CD4-positive, alpha-beta memory T cell (primary cell): ENCODE measurements at regions of chr9 and their contacts with region 1.

Region 1: DNA sequence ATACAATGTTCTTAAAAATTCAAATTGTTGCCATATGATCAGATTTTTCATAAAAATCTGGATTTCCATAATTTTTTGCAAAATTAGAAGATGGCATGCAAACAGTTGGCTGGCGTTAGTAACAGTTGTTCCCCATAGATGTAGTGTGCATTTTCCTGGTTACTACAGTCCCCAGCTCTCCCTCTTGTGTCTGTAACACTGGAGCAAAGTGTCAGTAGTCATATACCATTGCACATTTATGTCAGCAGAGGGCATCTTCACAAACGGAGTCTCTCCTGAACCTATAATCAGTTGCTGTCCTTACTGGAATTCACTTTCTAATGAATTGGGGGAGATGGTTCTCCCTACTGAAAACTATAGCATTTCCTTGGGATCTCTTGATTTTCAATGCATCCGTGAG is 44.7 kb upstream of the DMAC1 start:
- DNase-seq: peak in 4 of 5 donors; percentile 24 to 35 (median 28)
- H3K4me3 ChIP-seq: no peak overlapping the region
- H3K4me3 Mint-ChIP-seq: no peak overlapping the region
- H3K27ac ChIP-seq: no peak overlapping the region
- H3K27ac Mint-ChIP-seq: no peak overlapping the region
- H3K4me1 ChIP-seq: no peaks in the 10 kb centered on the region
- H3K4me1 Mint-ChIP-seq: peaks cover 0 to 5% (median 2%) of the 10 kb centered on the region in 4 donors
- H3K27me3 ChIP-seq: no peaks in the 10 kb centered on the region
- H3K27me3 Mint-ChIP-seq: no peaks in the 10 kb centered on the region

Region 2: DNA sequence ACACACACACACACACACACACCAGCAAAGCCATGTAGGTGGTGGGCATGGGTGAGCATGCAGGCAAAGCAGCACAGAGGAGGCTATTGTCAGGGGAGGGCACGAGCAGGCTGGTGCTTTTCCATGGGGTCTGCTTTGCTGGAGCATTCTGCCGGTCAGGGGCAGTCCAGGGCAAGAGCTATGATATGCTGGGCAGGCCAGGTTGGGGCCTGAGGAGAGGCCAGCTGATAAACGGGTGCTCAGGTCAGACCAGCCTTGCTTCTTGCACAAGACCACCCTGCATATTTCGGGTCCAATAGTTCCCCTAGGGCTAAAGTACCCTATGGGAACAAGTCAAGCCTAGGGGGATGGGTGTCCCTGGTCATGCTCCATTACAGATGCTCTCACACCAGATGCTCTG is 209.3 kb after region 1 on chr9:
- CTCF ChIA-PET with region 1: interaction called, 4 read pairs
- POLR2A ChIA-PET with region 1: no interaction called
- intact Hi-C with region 1: loop called (anchors 10 kb)
- DNase-seq: no peak
- H3K4me3 ChIP-seq: no peak overlapping the region
- H3K4me3 Mint-ChIP-seq: no peak overlapping the region
- H3K27ac ChIP-seq: no peak overlapping the region
- H3K27ac Mint-ChIP-seq: no peak overlapping the region
- H3K4me1 ChIP-seq: no peaks in the 10 kb centered on the region
- H3K4me1 Mint-ChIP-seq: peaks cover 0 to 3% (median 0%) of the 10 kb centered on the region in 4 donors
- H3K27me3 ChIP-seq: no peaks in the 10 kb centered on the region
- H3K27me3 Mint-ChIP-seq: no peaks in the 10 kb centered on the region

Region 3: GRCh38 chr9:8179381-8180053 is 335.3 kb after region 1 on chr9:
- CTCF ChIA-PET with region 1: no interaction called
- POLR2A ChIA-PET with region 1: no interaction called
- intact Hi-C with region 1: loop called (anchors 5 kb)
- DNase-seq: no peak
- H3K4me3 ChIP-seq: no peak overlapping the region
- H3K4me3 Mint-ChIP-seq: no peak overlapping the region
- H3K27ac ChIP-seq: no peak overlapping the region
- H3K27ac Mint-ChIP-seq: no peak overlapping the region
- H3K4me1 ChIP-seq: no peaks in the 10 kb centered on the region
- H3K4me1 Mint-ChIP-seq: no peaks in the 10 kb centered on the region
- H3K27me3 ChIP-seq: no peaks in the 10 kb centered on the region
- H3K27me3 Mint-ChIP-seq: peaks cover 3 to 9% of the 10 kb centered on the region in 2 donors